Activated naive CD4-positive, alpha-beta T cell treated with anti-CD3 and anti-CD28 coated beads for 36 hours (primary cell): ENCODE measurements at regions of chrX and their contacts with region 1.

Region 1: DNA sequence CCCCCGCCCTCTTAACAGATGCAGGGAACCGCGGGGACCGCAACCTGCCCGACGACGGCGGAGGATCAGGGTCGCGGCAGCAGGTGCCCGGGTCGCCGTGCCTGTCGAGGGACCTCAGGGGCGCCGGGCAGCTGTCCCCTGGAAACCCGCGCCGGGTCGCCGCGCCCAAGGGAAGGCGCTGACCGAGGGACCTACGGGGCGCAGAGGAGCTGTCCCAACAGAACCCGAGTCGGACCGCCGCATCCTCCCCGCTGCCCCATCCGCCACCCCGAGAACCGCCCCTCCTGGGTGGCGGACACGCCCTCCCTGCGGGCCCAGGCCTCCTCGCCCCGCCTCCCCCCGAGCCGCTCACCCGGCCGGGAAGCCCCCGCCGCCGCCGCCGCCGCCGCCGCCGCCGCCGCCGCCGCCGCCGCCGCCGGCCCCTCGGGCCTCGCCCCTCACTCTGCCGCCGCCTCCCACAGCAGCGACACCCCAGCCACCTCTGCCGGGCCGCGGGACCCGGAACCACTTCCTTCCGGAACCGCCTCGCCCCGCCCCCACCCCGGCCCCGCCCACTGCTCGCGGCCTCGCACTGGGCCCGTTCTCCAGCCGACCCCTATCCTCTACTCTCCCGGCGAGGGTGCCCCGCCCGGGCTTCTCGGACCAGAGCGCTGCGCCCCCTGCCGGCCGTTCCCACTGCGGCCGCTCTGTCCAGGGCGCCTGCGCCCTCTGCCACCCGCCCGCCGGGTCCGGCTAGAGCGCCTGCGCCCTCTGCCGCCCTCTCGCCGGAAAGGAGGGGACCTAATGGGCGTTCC is at the start of gene BCLAF3:
- DNase-seq: peak; percentile 87
- H3K4me3 Mint-ChIP-seq: peak within 1 kb of the TSS; percentile 87
- H3K27ac Mint-ChIP-seq: peak within 1 kb of the TSS; percentile 90
- H3K4me1 Mint-ChIP-seq: peaks cover 21% of the 10 kb centered on the region
- H3K27me3 Mint-ChIP-seq: no peaks in the 10 kb centered on the region
- total RNA-seq, gene BCLAF3: 3.6 to 4.7 TPM

Region 2: GRCh38 chrX:19544693-19545305 is 446.0 kb before region 1 on chrX:
- CTCF ChIA-PET with region 1: no interaction called
- intact Hi-C with region 1: loop called (anchors 1 kb)
- DNase-seq: peak; percentile 67
- H3K4me3 Mint-ChIP-seq: no peak overlapping the region
- H3K27ac Mint-ChIP-seq: peak overlapping the region; percentile 39
- H3K4me1 Mint-ChIP-seq: peaks cover 21% of the 10 kb centered on the region
- H3K27me3 Mint-ChIP-seq: no peaks in the 10 kb centered on the region

Region 3: GRCh38 chrX:19659925-19660324 is 330.8 kb before region 1 on chrX:
- CTCF ChIA-PET with region 1: no interaction called
- intact Hi-C with region 1: no loop called
- DNase-seq: no peak
- H3K4me3 Mint-ChIP-seq: no peak overlapping the region
- H3K27ac Mint-ChIP-seq: no peak overlapping the region
- H3K4me1 Mint-ChIP-seq: peaks cover 53% of the 10 kb centered on the region
- H3K27me3 Mint-ChIP-seq: no peaks in the 10 kb centered on the region

Region 4: DNA sequence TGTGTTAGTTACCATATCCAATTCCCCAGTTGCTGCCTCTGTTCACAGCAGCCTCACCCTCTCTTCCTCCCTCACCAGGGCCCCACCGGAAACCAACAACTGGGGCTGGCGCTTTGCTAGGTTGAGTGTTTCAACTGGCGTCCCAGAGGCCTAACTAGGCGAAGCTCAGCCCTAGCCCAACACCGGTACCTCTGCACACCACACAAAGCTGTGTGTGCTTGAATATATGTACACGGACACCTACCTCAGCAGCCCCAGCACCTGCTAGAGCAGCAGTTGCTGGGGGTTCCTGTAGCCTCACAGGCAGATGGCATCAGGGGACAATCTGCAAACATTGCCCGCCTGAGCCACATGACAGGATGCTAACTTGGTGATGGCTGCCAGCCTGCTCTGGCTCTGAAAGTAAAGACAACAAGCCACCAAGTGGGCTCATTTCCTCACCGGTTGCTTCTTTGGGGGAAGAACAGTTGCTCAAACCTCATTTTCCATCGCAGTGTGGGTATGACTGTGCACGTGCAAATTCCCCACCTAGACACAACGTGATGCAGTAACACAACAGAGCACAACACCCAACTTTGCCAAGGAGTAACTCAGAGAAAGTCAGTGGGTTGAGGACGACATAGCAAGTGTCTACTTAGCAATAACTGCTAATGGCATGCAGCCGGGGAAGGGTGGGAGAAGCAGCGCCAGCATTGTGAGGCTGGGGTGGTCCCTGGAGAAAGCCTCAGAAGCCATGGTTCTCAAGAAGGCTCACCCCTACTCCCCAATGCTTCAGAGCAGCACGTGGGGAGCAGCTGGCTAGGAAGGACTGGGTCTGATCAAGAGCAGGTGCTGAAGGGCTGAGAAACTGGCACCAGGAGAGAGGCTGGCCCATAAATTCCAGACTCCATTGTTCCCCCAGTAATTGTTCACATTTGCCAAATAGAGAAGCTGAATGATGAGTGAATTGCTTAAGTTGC is 242.8 kb before region 1 on chrX:
- CTCF ChIA-PET with region 1: no interaction called
- intact Hi-C with region 1: loop called (anchors 5 kb)
- DNase-seq: peak; percentile 87
- H3K4me3 Mint-ChIP-seq: peak overlapping the region; percentile 65
- H3K27ac Mint-ChIP-seq: peak overlapping the region; percentile 94
- H3K4me1 Mint-ChIP-seq: peaks cover 92% of the 10 kb centered on the region
- H3K27me3 Mint-ChIP-seq: no peaks in the 10 kb centered on the region

Region 5: DNA sequence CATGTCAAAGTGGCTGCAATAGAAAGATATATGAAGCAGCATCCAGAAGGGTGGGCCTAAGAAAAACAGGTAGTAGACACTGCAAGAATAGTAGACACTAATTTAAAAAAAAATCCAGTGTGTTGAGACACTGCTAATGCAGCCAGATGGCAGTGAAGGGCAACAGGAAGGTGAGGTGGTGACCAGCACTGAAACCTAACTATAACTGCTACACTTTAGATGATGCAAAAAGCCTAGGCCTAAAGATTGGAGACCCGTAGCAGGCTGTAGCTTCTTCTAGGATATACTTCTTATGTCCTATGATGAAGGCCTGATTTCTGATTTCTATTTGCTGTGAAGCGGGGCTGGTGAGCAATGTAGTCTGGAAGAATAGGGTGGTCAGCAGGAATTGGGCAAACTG is 64.7 kb before region 1 on chrX:
- CTCF ChIA-PET with region 1: no interaction called
- intact Hi-C with region 1: loop called (anchors 1 kb)
- DNase-seq: peak; percentile 26
- H3K4me3 Mint-ChIP-seq: no peak overlapping the region
- H3K27ac Mint-ChIP-seq: no peak overlapping the region
- H3K4me1 Mint-ChIP-seq: no peaks in the 10 kb centered on the region
- H3K27me3 Mint-ChIP-seq: no peaks in the 10 kb centered on the region

Region 6: DNA sequence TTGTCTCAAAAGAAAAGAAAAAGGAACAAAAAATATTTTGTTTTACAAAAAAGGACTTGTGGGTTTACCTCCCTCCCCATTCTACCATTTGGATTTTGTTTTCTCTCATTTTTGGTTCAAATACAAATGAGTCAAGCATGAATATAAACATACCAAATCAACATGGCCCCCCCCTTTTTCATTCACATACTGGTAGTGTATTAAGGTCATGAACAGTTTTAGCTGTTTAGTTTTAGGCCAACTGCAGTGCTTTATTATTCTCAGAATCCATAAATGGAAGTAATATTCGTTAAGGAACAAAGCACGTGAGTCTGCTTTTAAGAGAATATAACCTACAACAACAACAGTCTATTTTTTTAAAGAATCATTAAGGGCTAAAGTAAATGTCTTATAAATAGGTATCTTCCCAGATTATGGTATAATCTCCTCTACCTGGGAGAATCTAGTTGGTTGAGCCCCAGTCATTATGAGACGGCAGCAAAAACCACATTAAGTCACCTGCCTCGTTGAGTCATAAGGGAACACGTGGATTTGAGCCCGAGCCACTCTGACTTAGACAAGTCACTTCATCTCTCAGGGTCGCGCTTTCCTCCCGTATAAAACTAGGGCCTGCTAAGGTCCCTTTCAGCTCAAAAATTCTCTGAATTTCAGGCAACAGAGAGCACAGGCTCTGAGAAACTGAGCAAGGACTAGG is 26.6 kb before region 1 on chrX:
- CTCF ChIA-PET with region 1: no interaction called
- intact Hi-C with region 1: loop called (anchors 1 kb)
- DNase-seq: peak; percentile 77
- H3K4me3 Mint-ChIP-seq: no peak overlapping the region
- H3K27ac Mint-ChIP-seq: no peak overlapping the region
- H3K4me1 Mint-ChIP-seq: peaks cover 22% of the 10 kb centered on the region
- H3K27me3 Mint-ChIP-seq: no peaks in the 10 kb centered on the region

Region 7: GRCh38 chrX:20128670-20129069 is 137.9 kb after region 1 on chrX:
- CTCF ChIA-PET with region 1: no interaction called
- intact Hi-C with region 1: loop called (anchors 10 kb)
- DNase-seq: no peak
- H3K4me3 Mint-ChIP-seq: no peak overlapping the region
- H3K27ac Mint-ChIP-seq: no peak overlapping the region
- H3K4me1 Mint-ChIP-seq: peaks cover 3% of the 10 kb centered on the region
- H3K27me3 Mint-ChIP-seq: no peaks in the 10 kb centered on the region

Region 8: GRCh38 chrX:20315140-20315539 is 324.4 kb after region 1 on chrX:
- CTCF ChIA-PET with region 1: no interaction called
- intact Hi-C with region 1: no loop called
- DNase-seq: no peak
- H3K4me3 Mint-ChIP-seq: no peak overlapping the region
- H3K27ac Mint-ChIP-seq: no peak overlapping the region
- H3K4me1 Mint-ChIP-seq: peaks cover 12% of the 10 kb centered on the region
- H3K27me3 Mint-ChIP-seq: no peaks in the 10 kb centered on the region